Right lobe of liver (tissue), 6 donors: ENCODE measurements at regions of chr4 and their contacts with region 1.

Region 1: DNA sequence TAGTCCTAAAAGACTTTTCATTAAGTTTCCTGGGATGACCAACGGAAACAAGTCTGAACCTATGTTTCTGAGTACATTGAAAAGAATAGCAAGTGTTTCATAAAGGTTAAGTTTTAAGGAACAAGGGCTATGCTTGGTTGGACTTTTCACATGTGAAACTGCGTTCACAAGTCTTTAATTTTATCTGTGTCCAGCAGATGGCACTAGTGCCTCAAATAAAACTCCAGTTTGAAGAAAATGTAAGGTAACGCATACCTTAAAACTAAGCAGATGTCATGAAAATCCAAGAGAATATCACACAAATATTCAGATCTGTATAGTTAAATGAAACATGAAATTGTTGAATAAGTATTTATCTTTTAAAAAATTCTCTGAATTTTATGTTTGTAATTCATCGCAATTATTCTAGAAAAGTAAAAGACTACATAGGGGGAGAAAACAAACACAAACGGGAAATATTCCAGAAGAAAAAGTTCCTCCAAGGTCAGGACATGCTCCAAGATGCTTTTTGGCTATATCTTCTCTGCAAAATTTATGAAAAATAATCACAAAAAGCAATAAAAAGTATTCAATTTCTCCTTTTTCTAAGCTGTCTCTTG is 89.6 kb upstream of the MAD2L1 start:
- DNase-seq: no peak
- ATAC-seq: peak; percentile 75 to 79 (median 76)
- H3K4me3 ChIP-seq: no peak overlapping the region
- H3K27ac ChIP-seq: no peak overlapping the region
- H3K4me1 ChIP-seq: no peaks in the 10 kb centered on the region
- H3K27me3 ChIP-seq: no peaks in the 10 kb centered on the region
- CTCF ChIP-seq: peak; percentile 62 to 72 (median 69)
- POLR2A ChIP-seq: no peak

Region 2: DNA sequence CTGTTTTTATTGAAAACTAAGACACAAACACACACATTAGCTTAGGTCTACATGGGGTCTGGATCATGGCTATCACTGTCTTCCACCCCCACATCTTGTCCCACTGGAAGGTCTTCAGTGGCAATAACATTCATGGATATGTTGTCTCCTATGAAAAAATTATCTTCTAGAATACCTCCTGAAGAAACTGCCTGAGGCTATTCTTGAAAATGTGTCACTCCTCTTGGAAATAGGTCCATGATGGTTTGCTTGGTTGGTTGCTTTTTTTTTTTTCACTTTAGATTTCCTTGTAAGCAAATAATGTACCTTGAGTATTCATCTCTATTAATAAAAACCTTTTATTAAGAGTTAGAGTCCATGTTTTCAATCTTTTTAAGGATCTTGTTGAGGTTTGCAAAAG is 332.3 kb before region 1 on chr4:
- intact Hi-C with region 1: no loop called
- DNase-seq: no peak
- ATAC-seq: no peak
- H3K4me3 ChIP-seq: no peak overlapping the region
- H3K27ac ChIP-seq: no peak overlapping the region
- H3K4me1 ChIP-seq: no peaks in the 10 kb centered on the region
- H3K27me3 ChIP-seq: no peaks in the 10 kb centered on the region
- CTCF ChIP-seq: no peak
- POLR2A ChIP-seq: no peak

Region 3: DNA sequence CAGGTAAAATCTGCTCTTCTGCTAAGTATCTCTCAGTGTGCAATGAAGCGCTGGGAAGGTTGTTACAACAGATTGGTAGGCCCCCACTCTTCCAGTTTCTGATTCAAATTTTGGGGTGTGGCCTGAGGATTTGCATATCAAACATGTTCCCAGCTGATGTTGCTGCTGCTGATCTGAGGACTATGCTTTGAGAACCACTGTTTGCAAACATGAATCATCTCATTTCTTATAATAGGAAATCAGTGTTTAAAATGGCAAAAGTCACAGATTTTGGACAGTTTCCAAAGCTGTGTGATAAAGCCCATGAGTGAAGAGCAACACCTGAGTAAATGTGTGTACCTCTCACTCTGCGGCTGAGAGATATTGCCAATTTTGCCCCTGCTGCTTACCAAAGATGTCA is 952.3 kb after region 1 on chr4:
- intact Hi-C with region 1: loop called in 1 of 2 experiments (anchors 10 kb)
- DNase-seq: no peak
- ATAC-seq: no peak
- H3K4me3 ChIP-seq: no peak overlapping the region
- H3K27ac ChIP-seq: no peak overlapping the region
- H3K4me1 ChIP-seq: no peaks in the 10 kb centered on the region
- H3K27me3 ChIP-seq: no peaks in the 10 kb centered on the region
- CTCF ChIP-seq: no peak
- POLR2A ChIP-seq: no peak